A549 (cell line): ENCODE measurements at regions of chr13 and their contacts with region 1.

Region 1: DNA sequence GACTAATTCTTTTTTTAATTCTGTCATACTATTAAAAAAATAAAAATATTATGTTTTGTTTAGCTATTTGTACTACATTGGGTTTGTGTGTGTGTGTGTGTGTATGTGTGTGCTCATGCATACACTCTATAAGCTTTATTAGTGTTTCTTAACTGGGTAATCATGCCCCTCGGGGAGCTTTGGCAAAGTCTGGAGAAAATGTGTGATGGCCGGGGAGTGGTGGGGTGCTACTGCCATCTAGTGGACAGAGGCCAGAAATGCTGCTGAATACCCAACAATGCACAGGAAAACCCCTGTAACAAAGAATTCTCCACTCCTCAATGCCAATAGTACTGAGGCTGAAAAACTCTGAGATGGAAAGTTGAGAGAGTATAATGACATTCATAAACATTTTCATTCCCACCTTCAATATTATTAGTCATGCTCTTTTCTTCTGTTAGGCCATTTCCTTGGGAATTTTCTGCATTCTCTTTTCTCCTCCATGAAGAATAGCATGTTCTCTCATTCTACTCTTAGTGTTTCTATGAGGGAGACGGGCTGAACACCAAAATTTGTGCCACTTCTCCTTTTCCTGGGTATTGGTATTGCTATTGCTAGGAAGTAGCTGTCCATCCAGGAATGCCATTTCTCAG is 157.3 kb downstream of the DNAJC3 start:
- DNase-seq: peak; percentile 26 to 37
- ATAC-seq: peak; percentile 68 to 82; a peak in 4 of 6 replicates
- H3K4me3 ChIP-seq: no peak overlapping the region
- H3K27ac ChIP-seq: no peak overlapping the region
- H3K4me1 ChIP-seq: peaks cover 14% of the 10 kb centered on the region
- CTCF ChIP-seq: peak; percentile 74
- EP300 ChIP-seq: no peak
- POLR2A ChIP-seq: no peak
- RAD21 ChIP-seq: peak; percentile 84 to 92

Region 2: DNA sequence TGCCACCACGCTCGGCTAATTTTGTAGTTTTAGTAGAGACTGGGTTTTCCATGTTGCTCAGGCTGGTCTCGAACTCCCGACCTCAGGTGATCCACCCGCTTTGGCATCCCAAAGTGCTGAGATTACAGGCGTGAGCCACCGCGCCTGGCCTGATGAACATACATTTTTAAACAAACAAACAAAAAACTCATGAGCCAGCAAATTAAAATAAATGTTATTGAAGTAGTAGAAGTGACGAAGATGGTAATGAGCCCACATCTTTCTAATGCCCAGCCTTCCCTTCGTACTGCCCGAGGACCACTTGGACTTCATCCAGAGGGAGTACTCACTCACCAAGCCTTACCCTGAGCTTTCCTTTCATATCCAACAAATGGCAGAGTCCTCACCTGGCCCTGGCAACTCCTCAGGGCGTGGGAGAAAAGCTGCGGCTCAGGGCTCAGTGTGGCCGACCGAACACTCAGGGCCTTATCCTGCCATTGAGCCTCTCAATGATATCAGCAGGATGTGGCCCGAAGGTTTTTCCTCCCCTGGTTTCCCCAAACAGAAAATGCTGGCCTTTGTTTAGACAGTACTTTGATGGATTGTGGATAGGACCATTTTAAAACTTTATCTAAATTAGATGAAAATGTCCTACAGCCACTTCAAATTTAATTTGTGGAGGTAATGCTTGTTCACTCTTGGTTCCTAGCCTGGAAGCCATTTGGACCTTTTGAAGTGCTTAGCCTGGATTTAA is 510.2 kb before region 1 on chr13:
- CTCF ChIA-PET with region 1: no interaction called
- POLR2A ChIA-PET with region 1: no interaction called
- DNase-seq: no peak
- ATAC-seq: no peak
- H3K4me3 ChIP-seq: no peak overlapping the region
- H3K27ac ChIP-seq: no peak overlapping the region
- H3K4me1 ChIP-seq: no peaks in the 10 kb centered on the region
- CTCF ChIP-seq: no peak
- EP300 ChIP-seq: no peak
- POLR2A ChIP-seq: no peak
- RAD21 ChIP-seq: no peak

Region 3: DNA sequence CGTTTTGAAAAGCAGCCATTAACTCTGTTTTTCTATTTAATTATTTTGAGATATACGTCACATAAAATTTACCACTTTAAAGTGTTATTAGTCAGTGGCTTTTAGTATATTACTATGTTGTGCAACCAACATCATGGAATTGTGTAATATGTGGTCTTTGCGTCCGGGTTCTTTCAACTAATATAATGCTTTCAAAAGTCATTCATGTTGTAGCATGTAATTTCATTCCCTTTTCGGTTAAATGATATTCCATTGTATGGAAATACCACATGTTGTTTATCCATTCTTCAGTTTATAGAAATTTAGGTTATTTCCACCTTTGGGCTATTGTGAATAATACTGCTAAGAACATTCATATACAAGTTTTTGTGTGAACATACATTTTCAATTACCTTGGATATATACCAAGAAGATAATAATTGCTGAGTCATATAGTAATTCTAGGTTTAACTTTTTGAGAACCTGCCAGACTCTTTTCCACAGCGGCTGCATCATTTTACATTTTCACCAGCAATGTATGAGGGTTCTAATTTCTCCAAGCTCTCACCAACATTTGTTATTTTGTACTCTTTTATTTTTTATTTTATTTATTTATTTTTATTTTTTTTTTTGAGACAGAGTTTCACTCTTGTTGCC is 309.9 kb before region 1 on chr13:
- CTCF ChIA-PET with region 1: no interaction called
- POLR2A ChIA-PET with region 1: no interaction called
- DNase-seq: no peak
- ATAC-seq: no peak
- H3K4me3 ChIP-seq: no peak overlapping the region
- H3K27ac ChIP-seq: no peak overlapping the region
- H3K4me1 ChIP-seq: 0 out of 3 replicates have a peak, but pooled peaks cover 4% of the 10 kb centered on the region
- CTCF ChIP-seq: no peak
- EP300 ChIP-seq: no peak
- POLR2A ChIP-seq: no peak
- RAD21 ChIP-seq: no peak

Region 4: GRCh38 chr13:95536632-95537241 is 297.5 kb before region 1 on chr13:
- CTCF ChIA-PET with region 1: interaction called, 11 read pairs
- POLR2A ChIA-PET with region 1: no interaction called
- DNase-seq: peak in 1 of 2 experiments; percentile 21
- ATAC-seq: no peak
- H3K4me3 ChIP-seq: no peak overlapping the region
- H3K27ac ChIP-seq: peak overlapping the region; percentile 63 to 70; a peak in 5 of 6 replicates
- H3K4me1 ChIP-seq: peaks cover 53% of the 10 kb centered on the region
- CTCF ChIP-seq: peak; percentile 54
- EP300 ChIP-seq: no peak
- POLR2A ChIP-seq: no peak
- RAD21 ChIP-seq: peak; percentile 45 to 53

Region 5: GRCh38 chr13:95624020-95624419 is 210.2 kb before region 1 on chr13:
- CTCF ChIA-PET with region 1: interaction called, 101 read pairs
- POLR2A ChIA-PET with region 1: interaction called, 3 read pairs
- DNase-seq: peak; percentile 25 to 52
- ATAC-seq: peak; percentile 59 to 78; a peak in 4 of 6 replicates
- H3K4me3 ChIP-seq: no peak overlapping the region
- H3K27ac ChIP-seq: no peak overlapping the region
- H3K4me1 ChIP-seq: no peaks in the 10 kb centered on the region
- CTCF ChIP-seq: peak; percentile 66
- EP300 ChIP-seq: no peak
- POLR2A ChIP-seq: no peak
- RAD21 ChIP-seq: peak; percentile 74 to 77

Region 6: GRCh38 chr13:95809429-95809828 is 24.8 kb before region 1 on chr13:
- CTCF ChIA-PET with region 1: interaction called, 12 read pairs
- POLR2A ChIA-PET with region 1: no interaction called
- DNase-seq: no peak
- ATAC-seq: no peak
- H3K4me3 ChIP-seq: no peak overlapping the region
- H3K27ac ChIP-seq: no peak overlapping the region
- H3K4me1 ChIP-seq: no peaks in the 10 kb centered on the region
- CTCF ChIP-seq: no peak
- EP300 ChIP-seq: no peak
- POLR2A ChIP-seq: no peak
- RAD21 ChIP-seq: no peak

Region 7: DNA sequence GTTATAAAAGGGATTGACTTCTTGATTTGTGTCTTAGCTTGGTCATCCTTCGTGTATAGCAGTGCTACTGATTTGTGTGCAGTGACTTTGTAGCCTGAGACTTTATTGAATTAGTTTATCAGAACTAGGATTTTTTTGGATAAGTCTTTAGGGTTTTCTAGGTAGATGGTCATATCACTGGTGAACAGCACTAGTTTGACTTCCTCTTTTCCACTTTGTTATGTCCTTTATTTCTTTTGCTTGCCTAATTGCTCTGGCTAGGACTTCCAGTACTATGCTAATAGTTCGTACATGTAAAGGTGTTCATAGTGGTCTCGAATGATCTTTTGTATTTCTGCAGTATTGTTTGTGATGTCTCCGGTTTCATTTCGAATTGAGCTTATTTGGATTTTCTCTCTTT is 11.9 kb before region 1 on chr13:
- CTCF ChIA-PET with region 1: interaction called, 11 read pairs
- POLR2A ChIA-PET with region 1: no interaction called
- DNase-seq: no peak
- ATAC-seq: no peak
- H3K4me3 ChIP-seq: no peak overlapping the region
- H3K27ac ChIP-seq: no peak overlapping the region
- H3K4me1 ChIP-seq: no peaks in the 10 kb centered on the region
- CTCF ChIP-seq: no peak
- EP300 ChIP-seq: no peak
- POLR2A ChIP-seq: no peak
- RAD21 ChIP-seq: no peak